GM10248 (cell line): ENCODE measurements at regions of chr4 and their contacts with region 1.

Region 1: DNA sequence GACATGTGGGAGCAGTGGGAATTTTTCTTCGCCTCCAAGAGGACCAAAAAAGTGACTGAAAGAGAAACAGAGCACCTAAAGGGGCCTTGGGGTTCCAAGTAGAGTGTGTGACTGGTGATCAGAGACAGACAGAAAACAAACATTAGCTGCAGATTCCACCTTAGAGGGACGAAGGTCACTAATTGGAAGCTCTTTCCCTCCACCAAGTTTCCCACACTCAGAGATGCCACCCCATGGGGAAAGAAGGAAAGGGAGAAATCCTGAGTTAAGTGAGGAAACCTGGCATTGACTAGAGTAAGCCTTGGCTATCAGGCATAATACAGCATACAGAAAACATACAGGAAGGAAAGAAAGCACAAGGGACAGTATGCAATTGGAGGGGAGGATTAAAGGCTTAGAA is 90.9 kb downstream of the HNRNPD start:
- DNase-seq: no peak
- CTCF ChIP-seq: no peak

Region 2: DNA sequence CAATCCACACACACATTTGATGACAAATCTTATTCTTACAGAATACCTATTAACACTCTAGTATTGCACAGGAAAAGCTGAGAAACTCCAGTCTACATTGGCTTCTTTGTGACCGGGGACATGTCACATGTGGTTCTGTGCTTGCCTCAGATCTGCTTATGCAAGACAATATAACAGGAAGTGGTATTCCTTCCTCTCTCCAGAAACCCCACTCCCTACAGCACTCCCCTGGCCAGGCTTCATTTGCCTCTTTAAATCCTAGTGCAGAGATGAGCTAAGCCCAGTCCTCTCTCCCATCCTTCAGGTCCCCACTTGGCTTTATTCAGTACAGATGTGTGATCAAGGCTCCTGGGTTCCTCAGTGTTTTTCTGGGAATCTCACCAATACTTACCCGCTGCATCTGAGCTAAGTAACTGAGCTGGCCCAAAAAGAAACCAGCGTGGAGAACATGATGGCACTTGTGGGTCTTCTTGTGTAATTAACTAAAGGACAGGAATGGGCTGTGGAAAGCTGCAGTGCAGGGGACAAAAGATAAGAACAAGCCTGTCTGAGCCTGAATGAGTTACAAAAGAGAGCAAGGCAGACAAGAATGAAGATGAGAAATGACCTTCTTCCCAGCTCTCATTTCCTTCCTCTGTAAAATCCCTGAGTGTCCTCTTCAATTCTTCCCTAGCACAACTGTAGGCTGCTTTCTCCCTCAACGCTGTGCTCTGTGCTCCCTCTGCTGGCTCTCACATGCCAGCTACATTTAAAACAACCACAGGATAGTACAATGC is 14.6 kb before region 1 on chr4:
- CTCF ChIA-PET with region 1: interaction called, 10 read pairs
- POLR2A ChIA-PET with region 1: no interaction called
- DNase-seq: peak; percentile 38
- CTCF ChIP-seq: peak; percentile 89

Region 3: DNA sequence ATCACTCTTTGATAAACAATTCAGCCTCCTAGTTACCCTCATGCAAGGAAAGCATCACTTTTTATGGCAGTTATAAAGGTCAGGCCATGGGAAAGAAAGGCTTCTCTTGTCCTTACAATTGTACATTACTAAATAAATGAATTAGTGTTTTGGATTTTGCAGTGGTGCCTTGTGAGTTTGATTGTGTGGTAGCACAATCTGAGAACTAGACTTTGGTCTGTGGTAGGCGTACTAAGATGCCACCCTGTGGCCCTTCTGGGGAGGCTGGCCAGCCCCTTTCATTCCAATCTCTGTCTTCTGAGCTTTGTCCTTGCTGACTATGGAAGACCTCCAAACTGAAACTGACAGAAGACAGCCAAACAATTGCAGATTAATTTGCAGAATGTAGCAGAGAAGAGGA is 105.5 kb after region 1 on chr4:
- CTCF ChIA-PET with region 1: no interaction called
- POLR2A ChIA-PET with region 1: no interaction called
- DNase-seq: no peak
- CTCF ChIP-seq: no peak